ENCODE measurements at regions of chr15 and their contacts with region 1.

Region 1: GRCh38 chr15:40906091-40906990 is 12.1 kb downstream of the VPS18 start:
- DNase-seq: peak; percentile 97
- H3K4me3 ChIP-seq: peak overlapping the region; percentile 63
- H3K27ac ChIP-seq: peak overlapping the region; percentile 75
- H3K4me1 ChIP-seq: peaks cover 24% of the 10 kb centered on the region
- H3K27me3 ChIP-seq: no peaks in the 10 kb centered on the region

Region 2: GRCh38 chr15:40743921-40744814 is 162.2 kb before region 1 on chr15:
- in situ Hi-C with region 1: no loop called
- DNase-seq: peak; percentile 93
- H3K4me3 ChIP-seq: no peak overlapping the region
- H3K27ac ChIP-seq: peak overlapping the region; percentile 67
- H3K4me1 ChIP-seq: peaks cover 15% of the 10 kb centered on the region
- H3K27me3 ChIP-seq: no peaks in the 10 kb centered on the region

Region 3: DNA sequence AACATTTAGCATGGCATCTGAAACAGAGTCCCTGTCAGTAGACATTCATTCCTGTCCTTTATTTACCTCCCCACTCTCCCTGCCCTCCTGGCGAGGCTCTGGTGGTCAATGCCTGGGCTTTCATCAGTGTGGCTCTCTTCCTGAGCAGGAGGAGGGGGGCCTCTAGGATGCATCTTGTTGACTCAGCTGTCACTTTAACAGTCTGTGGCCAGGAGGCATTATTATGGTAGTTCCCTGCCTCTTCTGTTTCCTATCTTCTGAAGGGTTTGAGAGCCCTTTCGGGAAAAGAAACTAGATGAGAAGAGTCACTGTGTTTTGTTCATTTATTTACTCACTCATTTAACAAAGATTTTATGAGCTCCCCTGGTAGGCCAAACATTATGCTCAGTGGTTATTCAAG is 75.5 kb before region 1 on chr15:
- in situ Hi-C with region 1: no loop called
- DNase-seq: no peak
- H3K4me3 ChIP-seq: no peak overlapping the region
- H3K27ac ChIP-seq: no peak overlapping the region
- H3K4me1 ChIP-seq: no peaks in the 10 kb centered on the region
- H3K27me3 ChIP-seq: peaks cover 13% of the 10 kb centered on the region

Region 4: GRCh38 chr15:41022487-41023090 is 116.2 kb after region 1 on chr15:
- in situ Hi-C with region 1: loop called (anchors 10 kb)
- DNase-seq: peak; percentile 78
- H3K4me3 ChIP-seq: no peak overlapping the region
- H3K27ac ChIP-seq: no peak overlapping the region
- H3K4me1 ChIP-seq: peaks cover 20% of the 10 kb centered on the region
- H3K27me3 ChIP-seq: no peaks in the 10 kb centered on the region

Region 5: DNA sequence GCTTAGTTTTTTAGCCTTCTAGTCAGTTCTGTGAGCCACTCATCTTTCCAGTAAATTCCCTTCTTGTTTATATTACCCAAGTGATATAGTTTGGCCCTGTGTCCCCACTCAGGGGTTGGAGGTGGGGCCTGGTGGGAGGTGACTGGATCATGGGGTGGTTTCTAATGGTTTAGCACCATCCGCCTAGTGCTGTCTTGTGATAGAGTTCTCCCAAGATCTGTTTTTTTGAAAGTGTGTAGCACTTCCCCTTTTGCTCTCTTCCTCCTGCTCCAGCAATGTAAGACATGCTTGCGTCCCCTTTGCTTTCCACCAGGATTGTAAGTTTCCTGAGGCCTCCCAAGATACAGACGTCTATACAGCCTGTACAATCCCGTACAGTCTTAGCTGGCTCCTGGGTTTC is 263.4 kb after region 1 on chr15:
- in situ Hi-C with region 1: loop called (anchors 10 kb)
- DNase-seq: no peak
- H3K4me3 ChIP-seq: no peak overlapping the region
- H3K27ac ChIP-seq: no peak overlapping the region
- H3K4me1 ChIP-seq: no peaks in the 10 kb centered on the region
- H3K27me3 ChIP-seq: no peaks in the 10 kb centered on the region

Measured in GM23248 (cell line).